ENCODE measurements at regions of chr12 and their contacts with region 1.

Region 1: DNA sequence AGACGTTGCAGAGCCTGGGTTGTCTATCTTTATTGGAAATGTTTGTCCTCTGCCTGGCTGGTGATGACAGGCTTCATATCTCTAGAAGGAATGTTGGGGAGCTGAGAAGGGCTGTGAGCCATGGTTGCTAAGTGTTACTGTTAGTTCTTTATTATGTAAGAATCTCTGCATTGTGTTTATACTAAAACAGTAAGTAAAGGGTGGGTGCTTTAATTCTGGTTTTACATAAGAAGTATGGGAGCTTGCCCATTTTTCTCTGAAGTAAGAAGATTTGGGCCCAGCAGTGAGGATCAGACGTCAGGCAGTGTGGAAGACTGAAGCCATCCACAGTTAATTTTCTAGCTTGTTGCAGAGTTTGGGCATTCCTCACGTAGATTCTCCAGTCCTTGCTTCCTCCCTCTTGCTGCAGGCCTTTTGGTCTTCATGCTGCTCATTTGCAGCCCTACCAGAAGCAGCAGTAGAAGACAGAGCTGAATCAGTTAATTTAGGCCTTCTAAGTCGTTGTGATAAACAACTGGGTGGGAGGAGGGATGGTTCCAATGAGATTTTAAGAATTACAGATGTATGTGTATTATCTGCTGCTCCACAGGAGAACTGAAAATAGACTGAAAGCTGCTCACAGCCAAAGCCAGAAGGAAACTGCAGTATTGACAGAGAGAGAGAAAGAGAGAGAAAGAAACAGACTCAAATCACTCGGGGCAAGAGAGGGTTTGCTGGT is 21.4 kb downstream of the WNT5B start:
- ATAC-seq: peak in 4 of 8 experiments; percentile 27 to 87 (median 68)
- H3K4me3 ChIP-seq: no peak overlapping the region
- H3K27ac ChIP-seq: no peak overlapping the region
- H3K4me1 ChIP-seq: peaks cover 0 to 6% of the 10 kb centered on the region in 2 donors

Region 2: DNA sequence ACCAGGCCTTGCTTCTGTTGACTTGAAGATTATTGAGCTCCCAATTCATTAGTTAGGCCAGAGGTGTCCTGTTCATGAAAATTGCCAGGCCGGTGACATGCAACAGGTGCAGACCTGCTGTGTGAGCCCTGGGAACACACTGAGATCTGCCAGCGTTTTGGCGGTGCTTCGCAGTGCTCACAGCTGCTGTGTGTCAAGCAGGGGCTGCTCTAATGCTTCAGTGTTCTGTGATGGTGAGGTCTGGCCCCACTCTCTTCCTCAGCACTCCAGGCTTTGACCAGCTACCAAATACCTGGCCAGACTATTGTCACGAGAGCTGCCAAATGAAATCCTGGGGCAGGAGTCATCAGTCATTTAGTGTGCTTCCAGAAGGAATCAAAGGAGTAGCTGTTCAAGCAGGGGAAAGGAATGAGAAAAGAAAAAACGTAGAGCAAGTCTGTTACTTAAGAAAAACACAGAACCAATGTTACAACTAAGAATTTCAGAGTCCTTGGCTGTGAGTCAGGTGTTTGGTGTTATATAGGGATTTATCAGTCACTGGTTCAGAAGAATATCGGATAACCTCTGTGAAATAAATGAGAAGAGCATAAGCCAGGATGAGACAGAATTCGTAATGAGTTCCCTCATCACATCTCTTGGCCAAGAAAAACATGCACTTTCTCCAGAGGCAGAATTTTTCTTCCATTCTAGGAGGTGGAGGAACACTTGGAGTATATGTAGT is 206.8 kb before region 1 on chr12:
- in situ Hi-C with region 1: no loop called
- ATAC-seq: no peak
- H3K4me3 ChIP-seq: no peak overlapping the region
- H3K27ac ChIP-seq: no peak overlapping the region
- H3K4me1 ChIP-seq: peaks cover 7 to 9% of the 10 kb centered on the region in 2 donors

Region 3: DNA sequence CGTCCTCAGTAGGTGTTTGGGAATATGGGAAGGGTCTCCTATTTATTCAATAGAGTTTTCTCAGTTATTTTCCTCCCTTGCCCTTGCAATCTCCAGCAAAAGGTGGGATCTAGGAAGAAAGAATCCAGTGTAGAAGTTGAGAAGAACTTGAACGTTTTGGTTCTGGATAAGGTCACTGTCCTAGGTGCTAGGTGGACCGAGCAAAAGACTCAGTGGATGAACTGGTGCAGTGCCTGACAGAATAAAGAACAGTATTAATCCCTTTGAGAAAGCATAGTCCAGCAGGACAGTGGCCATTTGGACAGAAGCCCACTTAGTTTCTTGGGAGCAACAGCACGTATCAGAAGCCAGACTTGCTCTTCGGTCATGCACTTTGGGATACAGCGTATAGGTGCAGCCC is 137.3 kb after region 1 on chr12:
- in situ Hi-C with region 1: loop called (anchors 5 to 25 kb)
- ATAC-seq: no peak
- H3K4me3 ChIP-seq: no peak overlapping the region
- H3K27ac ChIP-seq: no peak overlapping the region
- H3K4me1 ChIP-seq: no peaks in the 10 kb centered on the region